ENCODE measurements at regions of chr14 and their contacts with region 1.

Region 1: DNA sequence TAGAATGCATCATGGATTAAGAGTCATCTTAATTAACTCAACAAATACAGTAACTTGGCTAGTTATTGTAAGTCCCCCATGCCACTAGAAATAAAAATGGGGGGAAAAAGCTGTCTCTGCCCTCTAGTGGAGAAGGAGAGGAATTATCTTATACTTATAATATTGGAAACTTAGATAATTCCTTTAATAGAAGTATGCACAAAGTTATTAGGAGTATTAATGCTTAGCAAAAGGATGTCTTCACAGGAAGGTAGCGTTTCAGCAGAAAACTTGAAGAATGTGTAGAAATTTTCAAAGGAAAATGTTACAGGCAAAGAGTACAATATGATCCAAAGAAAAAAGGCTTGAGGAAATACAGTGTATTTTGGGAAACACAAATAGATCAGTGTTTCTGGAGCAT is 19.8 kb downstream of the OR5AU1 start:
- DNase-seq: no peak
- ATAC-seq: no peak
- H3K4me3 Mint-ChIP-seq: no peak overlapping the region
- H3K27ac Mint-ChIP-seq: no peak overlapping the region
- H3K4me1 Mint-ChIP-seq: no peaks in the 10 kb centered on the region
- H3K27me3 Mint-ChIP-seq: peaks cover 7% of the 10 kb centered on the region
- CTCF ChIP-seq: no peak

Region 2: GRCh38 chr14:21163871-21164291 is 27.9 kb after region 1 on chr14:
- CTCF ChIA-PET with region 1: no interaction called
- POLR2A ChIA-PET with region 1: no interaction called
- intact Hi-C with region 1: no loop called
- DNase-seq: no peak
- ATAC-seq: no peak
- H3K4me3 Mint-ChIP-seq: no peak overlapping the region
- H3K27ac Mint-ChIP-seq: no peak overlapping the region
- H3K4me1 Mint-ChIP-seq: no peaks in the 10 kb centered on the region
- H3K27me3 Mint-ChIP-seq: peaks cover 18% of the 10 kb centered on the region
- CTCF ChIP-seq: no peak

Region 3: GRCh38 chr14:21184254-21184653 is 48.2 kb after region 1 on chr14:
- CTCF ChIA-PET with region 1: no interaction called
- POLR2A ChIA-PET with region 1: no interaction called
- intact Hi-C with region 1: loop called (anchors 5 kb)
- DNase-seq: no peak
- ATAC-seq: no peak
- H3K4me3 Mint-ChIP-seq: no peak overlapping the region
- H3K27ac Mint-ChIP-seq: no peak overlapping the region
- H3K4me1 Mint-ChIP-seq: no peaks in the 10 kb centered on the region
- H3K27me3 Mint-ChIP-seq: peaks cover 14% of the 10 kb centered on the region
- CTCF ChIP-seq: no peak

Measured in activated B cell treated with CpG ODN at 0.5 μM for 24 hours (primary cell).